Mammary epithelial cell (primary cell): ENCODE measurements at regions of chr1 and their contacts with region 1.

Region 1: GRCh38 chr1:70509996-70510876 is 99.2 kb downstream of the CTH start:
- DNase-seq: peak; percentile 84
- H3K4me3 ChIP-seq: no peak overlapping the region
- H3K27ac ChIP-seq: no peak overlapping the region
- H3K4me1 ChIP-seq: peaks cover 13% of the 10 kb centered on the region
- H3K27me3 ChIP-seq: no peaks in the 10 kb centered on the region
- CTCF ChIP-seq: peak; percentile 63 to 66

Region 2: DNA sequence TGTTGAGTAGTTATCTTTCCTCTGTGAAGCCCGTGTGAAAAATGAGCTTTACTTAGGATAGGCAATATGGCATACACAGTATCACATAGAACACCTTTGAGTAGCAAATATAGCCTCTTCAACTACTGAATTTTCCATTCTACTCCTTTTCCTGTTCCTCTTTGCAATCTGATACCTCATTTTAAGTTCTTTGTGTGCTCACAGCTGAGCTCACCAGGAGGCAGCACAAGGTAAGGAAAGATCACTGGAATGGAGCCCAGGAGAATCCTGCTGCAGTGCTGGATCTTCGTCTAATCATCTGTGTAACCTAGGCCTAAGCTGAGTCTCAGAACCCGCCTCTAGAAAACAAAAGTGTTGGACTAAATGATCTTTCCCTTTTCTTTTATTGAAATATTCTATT is 475.8 kb before region 1 on chr1:
- CTCF ChIA-PET with region 1: no interaction called
- dilution Hi-C with region 1: no loop called
- in situ Hi-C with region 1: loop called in 1 of 2 experiments (anchors 10 kb)
- intact Hi-C with region 1: loop called (anchors 2 kb)
- DNase-seq: peak; percentile 43
- H3K4me3 ChIP-seq: no peak overlapping the region
- H3K27ac ChIP-seq: no peak overlapping the region
- H3K4me1 ChIP-seq: peaks cover 7% of the 10 kb centered on the region
- H3K27me3 ChIP-seq: no peaks in the 10 kb centered on the region
- CTCF ChIP-seq: peak; percentile 69

Region 3: DNA sequence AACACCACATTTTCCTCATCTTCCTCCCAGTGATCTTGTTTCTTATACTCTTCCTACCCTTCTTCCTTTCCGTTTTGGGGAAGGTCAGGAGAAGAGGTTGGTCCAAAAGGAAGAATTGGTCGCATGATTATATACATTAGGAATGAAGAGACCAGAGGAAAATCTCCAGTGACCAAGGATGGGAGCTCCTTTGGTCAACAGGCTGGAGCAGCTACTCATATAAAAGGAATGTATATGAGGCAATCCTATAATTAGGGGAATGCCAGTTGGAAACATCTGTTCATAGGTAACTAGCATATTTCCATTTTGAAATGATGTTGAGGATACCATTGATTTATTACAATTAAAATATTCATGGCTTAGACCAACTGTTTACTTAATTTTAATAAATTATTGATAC is 419.4 kb before region 1 on chr1:
- CTCF ChIA-PET with region 1: no interaction called
- dilution Hi-C with region 1: no loop called
- in situ Hi-C with region 1: no loop called
- intact Hi-C with region 1: loop called (anchors 1 kb)
- DNase-seq: peak; percentile 68
- H3K4me3 ChIP-seq: no peak overlapping the region
- H3K27ac ChIP-seq: no peak overlapping the region
- H3K4me1 ChIP-seq: peaks cover 5% of the 10 kb centered on the region
- H3K27me3 ChIP-seq: no peaks in the 10 kb centered on the region
- CTCF ChIP-seq: no peak

Region 4: GRCh38 chr1:70112838-70113237 is 397.4 kb before region 1 on chr1:
- CTCF ChIA-PET with region 1: no interaction called
- dilution Hi-C with region 1: no loop called
- in situ Hi-C with region 1: no loop called
- intact Hi-C with region 1: no loop called
- DNase-seq: no peak
- H3K4me3 ChIP-seq: no peak overlapping the region
- H3K27ac ChIP-seq: no peak overlapping the region
- H3K4me1 ChIP-seq: no peaks in the 10 kb centered on the region
- H3K27me3 ChIP-seq: no peaks in the 10 kb centered on the region
- CTCF ChIP-seq: no peak

Region 5: DNA sequence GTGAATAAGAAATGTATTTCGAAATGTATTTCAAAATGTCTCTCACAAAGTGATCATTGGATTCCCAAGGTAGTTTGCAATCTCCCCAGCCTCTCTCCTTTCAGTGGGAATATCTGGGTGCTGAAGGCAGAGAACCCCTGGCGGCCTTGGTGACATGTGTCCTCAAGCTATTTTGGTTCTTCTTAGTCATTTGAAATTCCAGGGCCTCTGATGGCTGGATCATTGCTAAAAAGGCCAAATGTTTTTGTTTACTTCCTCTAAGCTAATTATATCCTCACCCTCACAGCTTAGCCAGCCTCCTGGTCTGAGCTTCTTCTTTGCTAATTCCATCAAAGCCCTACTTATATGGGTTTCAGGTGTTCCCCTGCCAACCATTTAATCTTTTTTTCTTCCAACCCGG is 376.1 kb before region 1 on chr1:
- CTCF ChIA-PET with region 1: no interaction called
- dilution Hi-C with region 1: no loop called
- in situ Hi-C with region 1: loop called in 1 of 2 experiments (anchors 10 kb)
- intact Hi-C with region 1: loop called (anchors 1 kb)
- DNase-seq: no peak
- H3K4me3 ChIP-seq: no peak overlapping the region
- H3K27ac ChIP-seq: no peak overlapping the region
- H3K4me1 ChIP-seq: no peaks in the 10 kb centered on the region
- H3K27me3 ChIP-seq: no peaks in the 10 kb centered on the region
- CTCF ChIP-seq: no peak

Region 6: DNA sequence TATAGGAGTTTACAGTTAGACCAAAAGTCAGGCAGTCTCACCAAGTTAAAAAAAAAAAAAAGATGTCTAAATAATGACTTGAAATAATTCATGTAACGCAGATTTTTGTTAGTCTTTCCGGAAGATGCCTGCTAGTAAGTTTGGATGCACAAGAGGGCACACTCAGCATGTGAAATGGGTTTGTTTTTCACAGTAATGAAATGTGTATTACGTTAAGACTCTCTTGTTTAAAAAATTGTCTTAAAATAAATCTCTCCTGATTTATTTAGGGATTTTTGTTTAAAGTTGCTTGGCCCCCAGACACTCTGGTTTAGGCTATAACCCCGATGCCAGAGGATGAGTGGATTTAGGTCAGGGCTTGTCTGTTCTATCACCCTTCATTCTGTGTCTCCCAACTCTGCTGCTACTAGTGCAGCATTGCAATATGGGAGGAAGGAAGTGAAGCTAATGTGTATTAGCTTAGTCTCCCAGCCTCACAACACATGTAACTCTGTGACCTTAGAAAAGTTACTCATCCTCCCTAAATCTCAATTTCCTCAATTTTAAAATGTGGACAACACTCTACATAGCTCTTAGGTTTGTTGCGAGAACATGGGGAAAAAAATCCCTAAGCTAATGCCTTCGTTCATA is 73.5 kb before region 1 on chr1:
- CTCF ChIA-PET with region 1: interaction called, 3 read pairs
- dilution Hi-C with region 1: no loop called
- in situ Hi-C with region 1: no loop called
- intact Hi-C with region 1: loop called (anchors 5 kb)
- DNase-seq: no peak
- H3K4me3 ChIP-seq: no peak overlapping the region
- H3K27ac ChIP-seq: no peak overlapping the region
- H3K4me1 ChIP-seq: no peaks in the 10 kb centered on the region
- H3K27me3 ChIP-seq: no peaks in the 10 kb centered on the region
- CTCF ChIP-seq: peak in 1 of 2 donors; percentile 31